Activated CD4-positive, alpha-beta T cell treated with anti-CD3 and anti-CD28 coated beads, Interleukin-2, amount 10 ng/mL, durations not matched to agents 7 days and 5 days (primary cell): ENCODE measurements at regions of chr1 and their contacts with region 1.

Region 1: DNA sequence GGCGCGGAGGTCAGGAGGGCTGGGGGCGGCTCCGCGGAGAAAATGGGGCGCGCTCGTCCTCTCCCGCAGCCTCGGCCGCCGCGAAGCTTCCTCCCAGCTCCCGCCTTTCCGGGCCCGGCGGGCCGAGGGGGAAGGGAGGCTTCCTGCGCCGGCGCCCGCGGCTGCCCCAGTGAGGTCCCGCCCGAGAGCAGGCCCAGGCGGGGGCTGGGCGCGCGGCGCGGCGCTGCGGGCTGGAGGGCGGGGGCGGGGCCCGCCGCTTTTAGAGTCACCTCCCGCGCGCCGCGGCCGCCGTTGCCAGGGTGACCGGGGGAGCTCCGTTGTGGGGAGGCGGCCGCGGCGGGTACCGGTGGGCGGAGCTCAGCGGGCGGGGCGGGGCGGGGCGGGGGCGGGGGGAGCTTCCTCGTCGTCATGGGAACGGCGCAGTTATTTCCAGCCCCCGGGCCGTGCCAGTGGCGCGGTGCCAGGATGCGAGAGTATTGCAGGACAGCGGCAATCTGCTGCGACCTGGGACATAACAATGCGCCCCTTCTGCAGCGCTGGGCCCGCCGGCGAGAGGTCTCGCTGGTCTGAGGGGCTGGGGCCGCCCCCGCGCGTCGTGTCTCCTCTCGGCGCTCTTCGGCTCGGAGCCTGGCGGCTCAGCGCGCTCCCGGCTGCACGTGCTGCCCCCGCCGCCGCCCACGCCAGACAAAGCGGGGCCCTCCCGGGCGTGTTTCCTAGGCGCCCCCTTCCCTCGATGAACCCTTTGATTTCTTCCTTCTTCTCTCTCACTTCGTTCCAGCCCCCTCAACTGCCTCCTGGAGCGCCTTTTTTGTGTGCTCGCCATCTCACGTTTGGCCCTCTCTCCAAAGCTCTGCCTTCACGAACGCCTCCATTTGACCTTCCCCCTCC is 16.9 kb downstream of the IER5 start:
- DNase-seq: peak; percentile 93
- H3K4me3 Mint-ChIP-seq: peak overlapping the region; percentile 78
- H3K27ac Mint-ChIP-seq: peak overlapping the region; percentile 81
- H3K4me1 Mint-ChIP-seq: peaks cover 68% of the 10 kb centered on the region
- H3K27me3 Mint-ChIP-seq: peaks cover 39% of the 10 kb centered on the region

Region 2: DNA sequence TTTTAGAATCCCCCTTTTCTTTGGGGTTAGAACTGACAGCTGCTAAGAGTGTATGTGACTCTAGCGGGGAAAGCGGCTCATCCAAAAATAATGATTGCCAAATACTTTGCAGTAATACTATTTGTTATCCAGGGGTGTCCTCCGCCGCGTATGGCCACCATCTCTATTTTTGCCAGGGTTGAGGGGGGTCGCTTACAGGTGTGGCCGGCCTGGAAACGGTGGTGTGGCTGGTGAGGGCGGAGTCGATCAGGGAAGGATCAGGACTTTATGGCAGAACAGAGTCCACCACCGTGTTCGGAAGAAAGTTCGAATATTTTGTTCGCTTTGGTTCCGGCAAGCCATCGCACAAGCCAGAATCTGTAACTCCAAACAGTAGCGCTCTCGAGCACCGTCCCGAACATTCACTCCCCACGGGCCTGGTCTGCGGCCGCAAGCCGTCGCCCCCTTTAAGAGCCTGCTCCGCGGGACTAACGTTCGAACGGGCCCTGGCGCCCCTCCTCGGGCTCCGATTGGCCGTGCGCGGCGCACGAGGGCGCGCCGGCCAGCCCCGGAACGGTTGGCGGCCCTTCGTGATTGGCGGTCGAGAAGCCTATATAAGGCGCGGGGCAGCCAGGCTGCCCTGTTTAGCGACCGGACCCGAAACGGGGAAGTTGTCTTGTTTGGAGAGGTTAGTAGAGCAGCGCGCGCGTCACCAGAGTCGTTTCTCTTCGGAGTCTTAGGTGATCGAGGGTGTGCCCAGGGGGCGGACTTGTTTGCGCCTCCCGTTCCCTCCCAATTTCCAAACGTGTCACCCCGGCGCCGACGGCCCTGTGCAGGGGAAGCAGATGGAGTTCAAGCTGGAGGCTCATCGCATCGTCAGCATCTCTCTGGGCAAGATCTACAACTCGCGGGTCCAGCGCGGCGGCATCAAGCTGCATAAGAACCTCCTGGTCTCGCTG is 17.0 kb before region 1 on chr1 and contains the start of gene IER5:
- CTCF ChIA-PET with region 1: interaction called, 30 read pairs
- POLR2A ChIA-PET with region 1: interaction called, 3 read pairs
- DNase-seq: peak; percentile 96
- H3K4me3 Mint-ChIP-seq: peak within 1 kb of the TSS; percentile 99
- H3K27ac Mint-ChIP-seq: peak within 1 kb of the TSS; percentile 96
- H3K4me1 Mint-ChIP-seq: peaks cover 47% of the 10 kb centered on the region
- H3K27me3 Mint-ChIP-seq: peaks cover 4% of the 10 kb centered on the region
- total RNA-seq, gene IER5: 20.3 to 24.9 TPM

Region 3: GRCh38 chr1:181117638-181118449 is 12.5 kb after region 1 on chr1:
- CTCF ChIA-PET with region 1: interaction called, 31 read pairs
- POLR2A ChIA-PET with region 1: no interaction called
- DNase-seq: no peak
- H3K4me3 Mint-ChIP-seq: no peak overlapping the region
- H3K27ac Mint-ChIP-seq: no peak overlapping the region
- H3K4me1 Mint-ChIP-seq: peaks cover 4% of the 10 kb centered on the region
- H3K27me3 Mint-ChIP-seq: peaks cover 2% of the 10 kb centered on the region

Region 4: GRCh38 chr1:181128592-181129497 is 23.5 kb after region 1 on chr1:
- CTCF ChIA-PET with region 1: interaction called, 17 read pairs
- POLR2A ChIA-PET with region 1: interaction called, 3 read pairs
- DNase-seq: no peak
- H3K4me3 Mint-ChIP-seq: no peak overlapping the region
- H3K27ac Mint-ChIP-seq: peak overlapping the region; percentile 15
- H3K4me1 Mint-ChIP-seq: peaks cover 40% of the 10 kb centered on the region
- H3K27me3 Mint-ChIP-seq: peaks cover 3% of the 10 kb centered on the region